Activated B cell treated with CpG ODN at 0.5 μM for 24 hours (primary cell): ENCODE measurements at regions of chr6 and their contacts with region 1.

Region 1: GRCh38 chr6:110873981-110874879 is at the start of gene AMD1:
- DNase-seq: peak; percentile 84
- ATAC-seq: peak; percentile 76
- H3K4me3 Mint-ChIP-seq: peak within 1 kb of the TSS; percentile 99
- H3K27ac Mint-ChIP-seq: peak within 1 kb of the TSS; percentile 99
- H3K4me1 Mint-ChIP-seq: peaks cover 43% of the 10 kb centered on the region
- H3K27me3 Mint-ChIP-seq: no peaks in the 10 kb centered on the region
- CTCF ChIP-seq: no peak
- total RNA-seq, gene AMD1: 61.7 and 65.5 TPM in 2 replicates

Region 2: GRCh38 chr6:109690737-109691621 is 1183.3 kb before region 1 on chr6 and contains the starts of genes AK9 and FIG4:
- CTCF ChIA-PET with region 1: no interaction called
- POLR2A ChIA-PET with region 1: no interaction called
- intact Hi-C with region 1: loop called (anchors 5 kb)
- DNase-seq: peak; percentile 88
- ATAC-seq: peak; percentile 93
- H3K4me3 Mint-ChIP-seq: peak within 1 kb of the TSS; percentile 94
- H3K27ac Mint-ChIP-seq: peak within 1 kb of the TSS; percentile 95
- H3K4me1 Mint-ChIP-seq: peaks cover 42% of the 10 kb centered on the region
- H3K27me3 Mint-ChIP-seq: no peaks in the 10 kb centered on the region
- CTCF ChIP-seq: no peak
- total RNA-seq, gene AK9: 9.1 and 10.6 TPM in 2 replicates
- total RNA-seq, gene FIG4: 19.8 and 21.8 TPM in 2 replicates

Region 3: DNA sequence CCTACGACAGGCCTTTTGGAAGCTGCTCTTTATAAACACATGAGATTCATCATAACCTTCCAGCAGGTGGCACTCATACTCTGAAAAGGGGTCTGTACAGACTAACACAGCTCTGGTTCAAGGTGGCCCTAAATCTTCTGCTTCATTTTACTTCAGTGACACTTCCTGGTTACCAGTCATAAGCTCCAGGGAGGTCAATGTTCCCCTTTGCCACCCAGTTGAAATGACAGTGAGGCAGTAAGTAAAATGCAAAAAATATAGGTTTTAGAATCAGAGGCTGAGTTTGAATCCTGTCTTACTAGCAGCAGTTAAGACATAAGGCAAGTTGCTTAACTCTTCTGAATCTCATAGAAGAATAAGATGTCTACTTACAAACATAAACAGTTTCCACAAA is 191.8 kb before region 1 on chr6:
- CTCF ChIA-PET with region 1: interaction called, 74 read pairs
- POLR2A ChIA-PET with region 1: interaction called, 32 read pairs
- intact Hi-C with region 1: loop called (anchors 1 kb)
- DNase-seq: no peak
- ATAC-seq: peak; percentile 99
- H3K4me3 Mint-ChIP-seq: no peak overlapping the region
- H3K27ac Mint-ChIP-seq: no peak overlapping the region
- H3K4me1 Mint-ChIP-seq: peaks cover 13% of the 10 kb centered on the region
- H3K27me3 Mint-ChIP-seq: no peaks in the 10 kb centered on the region
- CTCF ChIP-seq: no peak

Region 4: GRCh38 chr6:110944681-110945151 is 70.5 kb after region 1 on chr6:
- CTCF ChIA-PET with region 1: interaction called, 10 read pairs
- POLR2A ChIA-PET with region 1: interaction called, 33 read pairs
- intact Hi-C with region 1: loop called (anchors 1 kb)
- DNase-seq: peak; percentile 21
- ATAC-seq: peak; percentile 94
- H3K4me3 Mint-ChIP-seq: no peak overlapping the region
- H3K27ac Mint-ChIP-seq: peak overlapping the region; percentile 82
- H3K4me1 Mint-ChIP-seq: peaks cover 6% of the 10 kb centered on the region
- H3K27me3 Mint-ChIP-seq: no peaks in the 10 kb centered on the region
- CTCF ChIP-seq: no peak

Region 5: DNA sequence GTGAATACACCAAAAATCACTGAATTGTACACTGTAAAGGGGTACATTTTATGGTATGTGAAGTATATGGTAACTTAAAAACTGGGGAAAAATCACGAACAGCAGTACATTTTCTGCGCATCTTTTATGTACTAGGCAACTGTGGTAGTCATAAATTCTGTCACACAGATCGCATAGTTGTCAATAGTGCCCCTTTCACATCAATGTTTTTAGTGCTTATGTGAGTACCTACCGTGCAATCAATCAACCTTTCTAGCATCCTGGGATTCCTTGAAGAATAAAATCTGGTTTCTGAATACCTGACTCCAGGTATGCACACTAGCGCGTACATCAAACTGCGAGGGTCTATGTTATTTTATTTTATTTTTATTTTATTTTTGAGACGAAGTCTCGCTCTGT is 107.0 kb after region 1 on chr6:
- CTCF ChIA-PET with region 1: no interaction called
- POLR2A ChIA-PET with region 1: interaction called, 18 read pairs
- intact Hi-C with region 1: loop called (anchors 1 kb)
- DNase-seq: no peak
- ATAC-seq: no peak
- H3K4me3 Mint-ChIP-seq: peak overlapping the region; percentile 95
- H3K27ac Mint-ChIP-seq: peak overlapping the region; percentile 98
- H3K4me1 Mint-ChIP-seq: peaks cover 37% of the 10 kb centered on the region
- H3K27me3 Mint-ChIP-seq: no peaks in the 10 kb centered on the region
- CTCF ChIP-seq: no peak

Region 6: DNA sequence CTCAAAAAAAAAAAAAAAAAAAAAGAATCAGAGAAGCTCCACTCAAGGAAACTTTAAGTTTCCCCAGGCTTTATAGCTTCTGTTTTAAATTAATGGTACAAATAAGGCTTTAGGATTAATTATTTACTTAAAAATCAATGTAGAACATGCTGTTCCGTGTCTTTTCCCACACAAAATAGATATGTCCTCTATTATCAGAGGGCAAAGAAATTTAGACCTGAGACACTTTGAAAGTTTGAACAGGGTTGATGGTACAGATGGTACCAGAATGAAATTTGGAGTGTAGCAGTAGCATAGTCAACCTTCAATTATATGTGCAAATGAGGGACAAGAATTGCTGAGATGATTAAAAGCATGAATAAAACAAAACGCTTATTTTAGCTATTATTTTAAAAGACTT is 641.0 kb after region 1 on chr6:
- CTCF ChIA-PET with region 1: no interaction called
- POLR2A ChIA-PET with region 1: no interaction called
- intact Hi-C with region 1: no loop called
- DNase-seq: no peak
- ATAC-seq: no peak
- H3K4me3 Mint-ChIP-seq: no peak overlapping the region
- H3K27ac Mint-ChIP-seq: no peak overlapping the region
- H3K4me1 Mint-ChIP-seq: no peaks in the 10 kb centered on the region
- H3K27me3 Mint-ChIP-seq: no peaks in the 10 kb centered on the region
- CTCF ChIP-seq: no peak

Region 7: DNA sequence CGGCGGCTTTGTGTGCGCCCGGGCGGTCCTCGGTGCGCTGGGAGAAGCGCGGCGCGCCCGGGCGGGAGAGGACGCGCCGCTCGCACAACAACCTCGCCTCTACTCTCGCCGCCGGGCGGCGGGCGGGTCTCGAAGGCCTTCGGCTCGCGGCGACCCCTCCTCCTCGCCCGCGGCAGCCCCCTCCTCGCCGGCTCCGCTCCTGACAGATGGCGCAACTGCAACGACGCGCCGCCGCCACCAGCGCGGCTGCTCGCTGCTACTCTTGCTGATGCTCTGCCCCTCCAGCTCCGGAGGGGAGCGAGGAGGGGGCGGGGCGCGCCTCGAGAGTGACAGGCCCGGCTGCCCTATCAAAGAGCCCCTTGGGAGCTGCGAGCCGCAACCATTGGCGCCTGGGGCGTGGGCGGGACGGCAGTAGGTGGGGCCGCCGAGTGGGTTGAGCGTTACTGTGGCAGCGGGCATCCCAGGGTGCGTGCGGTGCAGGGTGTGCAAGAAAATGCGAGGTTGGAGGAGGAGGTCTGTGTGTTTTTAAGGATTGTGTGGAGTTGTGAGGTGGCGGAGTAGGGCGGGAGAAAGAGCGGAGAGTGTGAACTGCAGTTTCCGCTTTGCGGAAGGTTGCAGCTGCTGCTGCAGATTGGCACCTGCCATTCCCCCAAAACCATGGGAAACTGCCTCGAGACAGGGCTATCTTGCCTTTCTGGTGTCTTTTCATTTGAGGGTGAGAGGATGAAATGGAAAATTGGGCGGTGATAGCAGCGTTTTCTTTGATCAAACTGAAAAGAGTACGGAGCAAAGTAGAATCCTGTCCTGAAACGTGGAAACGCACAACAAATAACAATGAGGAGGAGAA is 999.2 kb after region 1 on chr6 and contains the start of gene FYN:
- CTCF ChIA-PET with region 1: no interaction called
- POLR2A ChIA-PET with region 1: no interaction called
- intact Hi-C with region 1: loop called (anchors 5 kb)
- DNase-seq: peak; percentile 97
- ATAC-seq: peak; percentile 94
- H3K4me3 Mint-ChIP-seq: peak within 1 kb of the TSS; percentile 93
- H3K27ac Mint-ChIP-seq: peak within 1 kb of the TSS; percentile 90
- H3K4me1 Mint-ChIP-seq: peaks cover 44% of the 10 kb centered on the region
- H3K27me3 Mint-ChIP-seq: no peaks in the 10 kb centered on the region
- CTCF ChIP-seq: no peak
- total RNA-seq, gene FYN: 57.8 and 64.7 TPM in 2 replicates